Right ventricle myocardium inferior (tissue), 1 donor: ENCODE measurements at regions of chr7 and their contacts with region 1.

Region 1: DNA sequence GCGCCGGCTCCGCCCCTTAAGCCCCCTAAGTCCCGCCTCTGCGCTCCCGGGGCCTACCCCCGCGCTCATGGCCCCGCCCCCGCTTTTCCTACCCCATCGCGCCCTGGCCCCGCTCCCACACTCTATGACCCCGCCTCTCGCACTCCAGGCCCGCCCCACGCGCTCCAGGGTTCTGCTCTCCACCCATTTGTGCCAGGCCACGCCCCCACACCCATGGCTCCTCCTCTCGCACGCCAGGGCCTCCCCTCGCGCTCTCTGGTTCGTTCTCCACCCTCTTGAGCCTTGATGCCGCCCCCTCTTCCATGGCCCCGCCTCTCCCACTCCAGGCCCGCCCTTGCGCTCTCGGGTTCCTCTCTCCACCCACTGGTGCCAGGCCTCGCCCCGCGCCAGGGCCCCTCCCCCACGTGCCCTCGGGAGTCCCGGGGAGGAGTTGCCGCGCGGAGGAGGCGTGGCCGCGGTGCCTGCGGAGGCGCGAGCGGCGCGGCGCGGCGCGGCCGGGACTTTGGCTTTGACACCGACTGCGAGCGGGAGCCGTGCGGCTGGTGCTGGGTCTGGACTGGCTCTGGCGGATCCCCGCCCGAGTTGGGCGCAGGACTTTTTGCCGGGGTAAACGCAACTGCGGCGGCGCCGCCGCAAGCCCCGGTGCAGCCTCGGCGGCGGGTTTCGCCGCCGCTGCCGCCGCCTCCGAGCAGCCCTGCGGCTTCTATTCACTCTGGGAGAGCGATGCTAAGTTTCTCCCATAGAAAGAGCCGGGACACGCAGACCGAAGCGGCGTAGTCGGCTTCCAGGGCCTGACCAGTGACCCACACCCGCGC is at the start of gene EEPD1:
- DNase-seq: peak; percentile 100
- ATAC-seq: peak; percentile 98
- total RNA-seq, gene EEPD1: 11.5 TPM

Region 2: GRCh38 chr7:35985126-35985754 is 167.7 kb before region 1 on chr7:
- intact Hi-C with region 1: loop called (anchors 5 kb)
- DNase-seq: peak; percentile 93
- ATAC-seq: peak; percentile 93

Region 3: GRCh38 chr7:36040679-36041078 is 112.3 kb before region 1 on chr7:
- intact Hi-C with region 1: loop called (anchors 5 kb)
- DNase-seq: no peak
- ATAC-seq: no peak

Region 4: GRCh38 chr7:36128448-36129047 is 24.4 kb before region 1 on chr7:
- intact Hi-C with region 1: loop called (anchors 1 kb)
- DNase-seq: peak; percentile 80
- ATAC-seq: peak; percentile 89

Region 5: DNA sequence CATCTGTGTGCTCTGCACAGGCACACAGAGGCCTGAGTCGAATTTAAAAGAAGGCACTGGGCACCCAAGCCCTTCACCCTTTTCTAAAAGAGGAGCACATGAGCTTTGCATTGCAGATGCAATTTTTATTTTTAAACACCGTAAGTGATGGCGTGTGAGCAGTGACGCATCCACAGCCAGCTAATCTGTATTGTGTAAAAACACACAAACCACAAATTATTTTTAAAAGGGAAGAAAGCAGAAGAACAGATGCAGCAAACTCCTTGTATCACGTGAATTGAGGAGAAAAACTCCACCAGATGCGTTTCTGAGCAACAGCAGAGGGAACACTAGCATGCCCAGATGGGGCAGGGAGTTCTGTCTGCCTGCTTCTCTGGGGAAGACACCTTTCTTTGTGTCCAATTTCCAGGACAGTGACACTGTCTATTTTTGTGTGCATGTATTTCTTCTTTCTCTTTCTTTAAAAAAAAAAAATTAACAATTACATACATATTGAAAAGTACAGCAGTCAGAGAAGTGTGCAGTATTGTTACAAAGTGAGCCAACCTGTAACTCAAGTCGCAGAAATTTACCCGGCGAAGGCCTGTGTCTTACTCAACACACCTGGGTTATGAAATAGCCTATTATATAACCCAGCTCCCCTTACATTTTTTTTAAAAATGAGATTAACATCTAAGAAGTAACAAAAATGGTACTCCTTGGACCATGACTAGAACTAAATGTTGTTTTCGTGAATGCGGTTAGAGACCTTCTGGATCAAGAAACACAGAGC is 39.3 kb after region 1 on chr7:
- intact Hi-C with region 1: loop called (anchors 5 kb)
- DNase-seq: no peak
- ATAC-seq: peak; percentile 41

Region 6: GRCh38 chr7:36291387-36292316 is 138.7 kb after region 1 on chr7:
- intact Hi-C with region 1: loop called (anchors 2 kb)
- DNase-seq: peak; percentile 90
- ATAC-seq: peak; percentile 93

Region 7: GRCh38 chr7:36396150-36396549 is 243.2 kb after region 1 on chr7:
- intact Hi-C with region 1: no loop called
- DNase-seq: no peak
- ATAC-seq: no peak

Region 8: GRCh38 chr7:36726806-36727503 is 574.0 kb after region 1 on chr7:
- intact Hi-C with region 1: no loop called
- DNase-seq: no peak
- ATAC-seq: no peak